Activated naive CD8-positive, alpha-beta T cell treated with anti-CD3 and anti-CD28 coated beads, Interleukin-2, amount 10 ng/mL, durations not matched to agents 7 days and 5 days (primary cell): ENCODE measurements at regions of chr7 and their contacts with region 1.

Region 1: GRCh38 chr7:43582503-43583423 is at the start of gene STK17A:
- DNase-seq: peak; percentile 98
- ATAC-seq: peak; percentile 78
- H3K4me3 Mint-ChIP-seq: peak within 1 kb of the TSS; percentile 99
- H3K27ac Mint-ChIP-seq: peak within 1 kb of the TSS; percentile 99
- H3K4me1 Mint-ChIP-seq: peaks cover 26% of the 10 kb centered on the region
- H3K27me3 Mint-ChIP-seq: peaks cover 22% of the 10 kb centered on the region
- total RNA-seq, gene STK17A: 106 TPM

Region 2: DNA sequence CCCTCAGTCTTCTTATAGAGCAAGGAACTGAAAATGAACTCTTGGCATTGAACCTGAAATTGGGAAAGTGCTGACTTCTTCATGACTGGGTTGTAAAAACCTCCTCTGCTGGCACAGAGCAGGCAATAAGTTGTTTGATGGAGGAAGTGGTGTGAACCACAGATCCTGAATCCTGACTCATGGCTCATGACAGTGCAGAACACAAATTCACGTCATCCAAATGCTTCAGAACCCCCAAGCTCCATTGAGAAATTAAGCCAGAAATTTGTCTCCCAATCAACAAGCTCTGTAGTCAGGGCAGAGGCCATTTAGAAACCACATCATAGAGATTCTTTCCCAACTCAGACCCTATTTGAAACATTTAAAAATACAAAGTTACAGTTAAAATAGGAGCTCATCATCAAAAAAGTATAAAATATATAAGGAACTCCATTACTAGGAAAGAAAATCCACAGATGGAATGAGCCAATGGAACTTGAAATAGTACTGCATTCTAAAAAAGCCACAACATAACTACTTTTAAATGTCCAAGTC is 10.2 kb before region 1 on chr7:
- POLR2A ChIA-PET with region 1: interaction called, 10 read pairs
- DNase-seq: no peak
- ATAC-seq: peak; percentile 74
- H3K4me3 Mint-ChIP-seq: no peak overlapping the region
- H3K27ac Mint-ChIP-seq: no peak overlapping the region
- H3K4me1 Mint-ChIP-seq: peaks cover 27% of the 10 kb centered on the region
- H3K27me3 Mint-ChIP-seq: peaks cover 3% of the 10 kb centered on the region

Region 3: GRCh38 chr7:43647673-43648472 is 65.1 kb after region 1 on chr7:
- POLR2A ChIA-PET with region 1: interaction called, 127 read pairs
- DNase-seq: no peak
- ATAC-seq: peak; percentile 8
- H3K4me3 Mint-ChIP-seq: peak overlapping the region; percentile 74
- H3K27ac Mint-ChIP-seq: peak overlapping the region; percentile 85
- H3K4me1 Mint-ChIP-seq: peaks cover 86% of the 10 kb centered on the region
- H3K27me3 Mint-ChIP-seq: no peaks in the 10 kb centered on the region

Region 4: DNA sequence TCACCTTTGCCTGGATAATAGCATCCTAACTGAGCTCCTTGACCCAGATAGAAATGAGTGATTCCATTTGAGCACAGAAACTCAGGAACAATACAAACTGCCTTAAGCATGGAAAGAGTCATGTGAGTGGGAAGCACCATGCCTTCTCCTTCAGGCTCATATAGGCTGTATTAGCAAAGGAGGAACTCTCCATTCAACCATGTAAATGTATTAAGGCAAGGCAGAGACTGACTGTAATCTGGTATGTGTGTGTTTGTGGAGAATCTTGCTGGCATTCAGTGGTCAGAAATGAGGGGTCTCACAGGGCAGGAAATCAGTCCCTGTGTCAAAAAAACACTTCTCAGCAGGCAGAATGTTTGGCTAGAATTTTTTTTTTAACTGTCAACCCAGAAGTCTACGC is 106.4 kb after region 1 on chr7:
- POLR2A ChIA-PET with region 1: interaction called, 17 read pairs
- DNase-seq: no peak
- ATAC-seq: no peak
- H3K4me3 Mint-ChIP-seq: no peak overlapping the region
- H3K27ac Mint-ChIP-seq: no peak overlapping the region
- H3K4me1 Mint-ChIP-seq: peaks cover 13% of the 10 kb centered on the region
- H3K27me3 Mint-ChIP-seq: no peaks in the 10 kb centered on the region

Region 5: GRCh38 chr7:43721193-43721806 is 138.5 kb after region 1 on chr7:
- POLR2A ChIA-PET with region 1: interaction called, 12 read pairs
- DNase-seq: no peak
- ATAC-seq: no peak
- H3K4me3 Mint-ChIP-seq: no peak overlapping the region
- H3K27ac Mint-ChIP-seq: no peak overlapping the region
- H3K4me1 Mint-ChIP-seq: peaks cover 19% of the 10 kb centered on the region
- H3K27me3 Mint-ChIP-seq: no peaks in the 10 kb centered on the region

Region 6: GRCh38 chr7:43747309-43748105 is 164.7 kb after region 1 on chr7:
- POLR2A ChIA-PET with region 1: no interaction called
- DNase-seq: no peak
- ATAC-seq: no peak
- H3K4me3 Mint-ChIP-seq: no peak overlapping the region
- H3K27ac Mint-ChIP-seq: no peak overlapping the region
- H3K4me1 Mint-ChIP-seq: peaks cover 1% of the 10 kb centered on the region
- H3K27me3 Mint-ChIP-seq: no peaks in the 10 kb centered on the region

Region 7: DNA sequence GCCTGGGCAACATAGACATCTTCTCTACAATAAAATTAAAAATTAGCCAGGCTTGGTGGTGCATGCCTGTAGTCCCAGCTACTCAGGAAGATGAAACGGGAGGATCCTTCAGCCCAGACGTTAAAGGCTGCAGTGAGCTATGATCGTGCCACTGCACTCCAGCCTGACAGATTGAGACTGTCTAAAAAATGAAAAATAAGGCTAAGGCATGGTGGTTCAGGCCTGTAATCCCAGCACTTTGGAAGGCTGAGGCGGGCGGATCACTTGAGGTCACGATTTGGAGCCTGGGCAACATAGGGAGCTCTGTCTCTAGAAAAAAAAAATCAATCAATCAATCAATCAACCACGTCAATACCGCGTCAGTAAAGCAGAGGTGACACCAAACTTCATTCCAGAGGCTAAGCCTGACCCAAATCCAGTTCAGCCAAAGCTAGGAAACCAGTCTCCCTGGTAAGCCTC is 255.5 kb after region 1 on chr7:
- POLR2A ChIA-PET with region 1: interaction called, 12 read pairs
- DNase-seq: no peak
- ATAC-seq: no peak
- H3K4me3 Mint-ChIP-seq: no peak overlapping the region
- H3K27ac Mint-ChIP-seq: no peak overlapping the region
- H3K4me1 Mint-ChIP-seq: peaks cover 18% of the 10 kb centered on the region
- H3K27me3 Mint-ChIP-seq: peaks cover 10% of the 10 kb centered on the region